ENCODE measurements at regions of chr5 and their contacts with region 1.

Region 1: GRCh38 chr5:115907177-115907576 is 55.1 kb upstream of the LVRN start:
- DNase-seq: no peak
- ATAC-seq: no peak
- H3K4me3 ChIP-seq: no peak overlapping the region
- H3K27ac ChIP-seq: no peak overlapping the region
- H3K4me1 ChIP-seq: no peaks in the 10 kb centered on the region
- H3K27me3 ChIP-seq: no peaks in the 10 kb centered on the region
- CTCF ChIP-seq: no peak

Region 2: GRCh38 chr5:114010362-114010761 is 1896.8 kb before region 1 on chr5:
- CTCF ChIA-PET with region 1: no interaction called
- POLR2A ChIA-PET with region 1: no interaction called
- in situ Hi-C with region 1: no loop called
- intact Hi-C with region 1: no loop called
- DNase-seq: no peak
- ATAC-seq: no peak
- H3K4me3 ChIP-seq: no peak overlapping the region
- H3K27ac ChIP-seq: no peak overlapping the region
- H3K4me1 ChIP-seq: no peaks in the 10 kb centered on the region
- H3K27me3 ChIP-seq: no peaks in the 10 kb centered on the region
- CTCF ChIP-seq: no peak

Region 3: DNA sequence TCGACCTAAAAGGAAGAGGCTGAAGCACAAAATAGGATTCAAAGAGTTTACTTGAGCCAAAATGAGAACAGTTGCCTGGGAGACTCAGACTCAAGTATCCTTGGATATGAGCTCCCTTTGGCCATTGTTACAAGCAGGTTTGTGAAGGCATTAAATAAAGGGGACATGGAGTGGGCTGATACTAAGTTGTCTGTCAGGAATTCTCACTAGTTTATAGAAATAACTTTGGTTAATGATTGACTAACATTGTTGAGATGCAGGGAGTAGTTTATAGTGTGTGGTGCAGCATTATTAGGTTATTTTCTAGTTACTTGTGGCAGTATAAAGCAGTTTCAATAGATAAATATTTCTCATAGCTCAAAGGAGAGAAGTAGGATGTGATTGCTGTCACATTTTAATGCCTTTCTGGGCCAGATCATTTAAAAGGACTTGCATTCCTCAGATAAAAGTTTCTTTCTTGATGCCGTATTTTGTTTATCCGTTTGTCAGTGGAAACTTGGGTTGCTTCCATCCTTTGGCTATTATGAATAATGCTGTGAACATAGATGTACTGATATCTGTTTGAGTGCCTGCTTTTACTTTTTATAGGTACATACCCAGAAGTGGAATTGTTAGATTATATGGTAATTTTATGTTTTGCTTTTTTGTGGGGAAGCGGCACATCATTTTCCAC is 56.3 kb before region 1 on chr5:
- CTCF ChIA-PET with region 1: interaction called, 11 read pairs
- POLR2A ChIA-PET with region 1: no interaction called
- in situ Hi-C with region 1: no loop called
- intact Hi-C with region 1: no loop called
- DNase-seq: no peak
- ATAC-seq: no peak
- H3K4me3 ChIP-seq: no peak overlapping the region
- H3K27ac ChIP-seq: no peak overlapping the region
- H3K4me1 ChIP-seq: no peaks in the 10 kb centered on the region; the same call in 1 of the 2 replicates
- H3K27me3 ChIP-seq: no peaks in the 10 kb centered on the region
- CTCF ChIP-seq: no peak

Region 4: DNA sequence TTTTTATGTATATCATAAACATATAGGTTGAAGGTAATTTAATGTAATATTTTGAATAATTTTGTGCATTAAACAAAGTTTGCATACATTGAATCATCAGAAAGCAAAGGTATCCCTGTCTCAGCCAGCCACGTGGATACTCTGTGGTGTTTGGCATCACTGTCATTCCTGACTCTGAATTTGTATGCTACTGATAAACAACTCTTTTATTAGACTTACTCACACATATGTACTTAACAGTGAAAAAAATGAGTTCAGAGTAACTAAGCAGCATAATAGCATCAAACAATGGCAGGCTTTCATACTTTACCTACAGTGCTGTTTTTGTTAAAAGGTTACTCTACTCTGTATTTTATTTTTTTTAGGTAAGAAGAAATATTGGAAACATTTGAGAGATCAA is 349.5 kb after region 1 on chr5:
- CTCF ChIA-PET with region 1: no interaction called
- POLR2A ChIA-PET with region 1: no interaction called
- in situ Hi-C with region 1: no loop called
- intact Hi-C with region 1: no loop called
- DNase-seq: no peak
- ATAC-seq: no peak
- H3K4me3 ChIP-seq: no peak overlapping the region
- H3K27ac ChIP-seq: no peak overlapping the region
- H3K4me1 ChIP-seq: no peaks in the 10 kb centered on the region
- H3K27me3 ChIP-seq: no peaks in the 10 kb centered on the region
- CTCF ChIP-seq: no peak

Measured in Panc1 (cell line).